ENCODE measurements at regions of chr6 and their contacts with region 1.

Region 1: GRCh38 chr6:166313255-166314070 is 5.3 kb upstream of the PRR18 start:
- DNase-seq: peak; percentile 58 to 87 (median 80)
- H3K4me3 ChIP-seq: peak overlapping the region in 1 of 7 experiments; percentile 4
- H3K27ac ChIP-seq: no peak overlapping the region
- H3K4me1 ChIP-seq: peaks cover 0 to 3% (median 2%) of the 10 kb centered on the region in 4 experiments
- H3K27me3 ChIP-seq: peaks cover 0 to 23% (median 10%) of the 10 kb centered on the region in 5 experiments

Region 2: GRCh38 chr6:166275714-166276166 is 37.7 kb before region 1 on chr6:
- CTCF ChIA-PET with region 1: interaction called, 10 read pairs
- POLR2A ChIA-PET with region 1: no interaction called
- DNase-seq: peak; percentile 61 to 79 (median 72)
- H3K4me3 ChIP-seq: no peak overlapping the region
- H3K27ac ChIP-seq: no peak overlapping the region
- H3K4me1 ChIP-seq: peaks cover 0 to 4% (median 2%) of the 10 kb centered on the region in 4 experiments
- H3K27me3 ChIP-seq: peaks cover 0 to 3% (median 0%) of the 10 kb centered on the region in 5 experiments

Region 3: GRCh38 chr6:166297606-166298005 is 15.9 kb before region 1 on chr6:
- CTCF ChIA-PET with region 1: interaction called, 20 read pairs
- POLR2A ChIA-PET with region 1: no interaction called
- DNase-seq: no peak
- H3K4me3 ChIP-seq: no peak overlapping the region
- H3K27ac ChIP-seq: no peak overlapping the region
- H3K4me1 ChIP-seq: peaks cover 1 to 9% (median 7%) of the 10 kb centered on the region in 4 experiments
- H3K27me3 ChIP-seq: peaks cover 0 to 4% (median 0%) of the 10 kb centered on the region in 5 experiments

Region 4: DNA sequence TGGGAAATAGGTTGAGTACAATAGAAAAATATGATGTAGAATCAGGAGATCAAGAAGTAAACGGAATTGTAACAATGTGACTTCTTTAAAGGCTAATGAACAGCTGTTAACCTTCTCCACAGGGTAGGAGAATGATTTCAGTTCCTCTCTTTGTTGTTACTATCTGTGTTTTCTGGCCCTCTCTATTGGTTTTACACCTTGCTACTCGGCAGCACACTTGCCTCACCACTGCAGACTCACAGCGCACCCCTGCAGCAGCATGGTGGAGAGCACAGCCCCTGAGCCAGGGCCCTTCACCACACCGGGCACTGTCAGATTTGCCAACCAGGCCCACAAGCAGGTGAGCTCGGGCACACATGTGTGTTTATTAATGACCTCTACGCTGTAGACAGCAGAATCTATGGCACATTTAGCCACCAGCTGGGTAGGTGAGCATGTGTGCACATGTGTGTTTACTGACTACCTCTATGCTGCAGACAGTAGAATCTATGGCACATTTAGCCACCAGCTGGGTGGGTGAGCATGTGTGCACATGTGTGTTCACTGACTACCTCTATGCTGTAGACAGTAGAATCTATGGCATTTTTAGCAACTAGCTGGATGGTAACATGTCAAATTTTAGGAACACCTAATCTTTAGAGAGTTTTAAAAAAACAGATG is 12.1 kb after region 1 on chr6:
- CTCF ChIA-PET with region 1: interaction called, 26 read pairs
- POLR2A ChIA-PET with region 1: no interaction called
- DNase-seq: no peak
- H3K4me3 ChIP-seq: no peak overlapping the region
- H3K27ac ChIP-seq: no peak overlapping the region
- H3K4me1 ChIP-seq: peaks cover 0 to 2% (median 0%) of the 10 kb centered on the region in 4 experiments
- H3K27me3 ChIP-seq: no peaks in the 10 kb centered on the region

Region 5: DNA sequence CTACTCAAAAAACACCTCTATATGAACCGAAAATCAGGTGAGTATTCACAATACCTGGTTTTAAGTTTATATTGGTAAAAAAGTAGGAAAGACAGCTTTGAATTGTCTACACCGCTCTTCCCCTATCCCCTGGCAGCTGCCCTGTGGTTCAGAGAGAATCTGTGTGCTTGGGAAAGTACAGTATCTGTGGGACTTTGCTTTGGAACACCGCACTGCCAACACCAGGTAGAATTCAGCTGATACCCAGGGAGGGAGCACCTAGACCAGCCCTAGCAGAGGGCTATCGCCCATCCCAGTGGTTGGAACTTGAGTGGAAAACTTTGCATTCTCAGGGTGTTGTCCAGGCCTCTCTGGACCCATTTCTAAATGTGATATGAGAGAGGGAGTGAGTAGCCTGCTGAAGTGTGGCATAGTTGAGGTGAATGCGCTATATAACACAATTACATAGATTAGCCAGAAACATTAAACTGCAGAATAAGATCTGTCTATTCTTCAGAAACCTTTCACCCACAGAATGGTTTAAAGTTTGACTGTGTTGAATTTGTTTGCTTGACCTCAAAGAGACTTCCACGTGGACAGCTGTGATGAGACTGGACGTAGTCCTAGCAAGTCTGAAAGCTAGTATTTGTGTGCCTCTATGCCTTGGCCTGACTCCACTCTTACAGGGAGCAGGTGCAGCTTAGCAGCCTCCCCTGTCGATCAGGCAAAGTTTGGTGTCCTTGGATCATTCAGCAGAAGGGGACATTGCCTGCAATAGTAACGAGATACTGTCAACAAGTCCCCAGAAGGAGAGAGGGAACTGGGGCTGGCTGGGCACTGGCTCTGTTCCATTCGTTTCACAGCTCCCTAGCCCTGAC is 80.8 kb after region 1 on chr6:
- CTCF ChIA-PET with region 1: interaction called, 118 read pairs
- POLR2A ChIA-PET with region 1: interaction called, 3 read pairs
- DNase-seq: no peak
- H3K4me3 ChIP-seq: no peak overlapping the region
- H3K27ac ChIP-seq: no peak overlapping the region
- H3K4me1 ChIP-seq: no peaks in the 10 kb centered on the region
- H3K27me3 ChIP-seq: peaks cover 0 to 3% (median 3%) of the 10 kb centered on the region in 5 experiments

Region 6: GRCh38 chr6:166402582-166403277 is 89.3 kb after region 1 on chr6:
- CTCF ChIA-PET with region 1: interaction called, 118 read pairs
- POLR2A ChIA-PET with region 1: interaction called, 3 read pairs
- DNase-seq: no peak
- H3K4me3 ChIP-seq: no peak overlapping the region
- H3K27ac ChIP-seq: no peak overlapping the region
- H3K4me1 ChIP-seq: peaks cover 0 to 2% (median 0%) of the 10 kb centered on the region in 4 experiments
- H3K27me3 ChIP-seq: no peaks in the 10 kb centered on the region

Measured in common myeloid progenitor, CD34-positive (primary cell).